ENCODE measurements at regions of chr20 and their contacts with region 1.

Region 1: GRCh38 chr20:51423290-51423667 is 119.2 kb downstream of the NFATC2 start:
- DNase-seq: peak; percentile 78
- H3K4me3 Mint-ChIP-seq: peak overlapping the region; percentile 13
- H3K27ac Mint-ChIP-seq: peak overlapping the region; percentile 90
- H3K4me1 Mint-ChIP-seq: peaks cover 86% of the 10 kb centered on the region
- H3K27me3 Mint-ChIP-seq: no peaks in the 10 kb centered on the region

Region 2: GRCh38 chr20:51404298-51405060 is 18.8 kb before region 1 on chr20:
- CTCF ChIA-PET with region 1: interaction called, 15 read pairs
- POLR2A ChIA-PET with region 1: interaction called, 41 read pairs
- intact Hi-C with region 1: loop called (anchors 1 kb)
- DNase-seq: peak; percentile 97
- H3K4me3 Mint-ChIP-seq: peak overlapping the region; percentile 17
- H3K27ac Mint-ChIP-seq: peak overlapping the region; percentile 99
- H3K4me1 Mint-ChIP-seq: peaks cover 93% of the 10 kb centered on the region
- H3K27me3 Mint-ChIP-seq: no peaks in the 10 kb centered on the region

Region 3: GRCh38 chr20:51469578-51470498 is 46.6 kb after region 1 on chr20:
- CTCF ChIA-PET with region 1: no interaction called
- POLR2A ChIA-PET with region 1: interaction called, 4 read pairs
- intact Hi-C with region 1: loop called (anchors 2 kb)
- DNase-seq: no peak
- H3K4me3 Mint-ChIP-seq: no peak overlapping the region
- H3K27ac Mint-ChIP-seq: peak overlapping the region; percentile 89
- H3K4me1 Mint-ChIP-seq: peaks cover 53% of the 10 kb centered on the region
- H3K27me3 Mint-ChIP-seq: no peaks in the 10 kb centered on the region

Region 4: DNA sequence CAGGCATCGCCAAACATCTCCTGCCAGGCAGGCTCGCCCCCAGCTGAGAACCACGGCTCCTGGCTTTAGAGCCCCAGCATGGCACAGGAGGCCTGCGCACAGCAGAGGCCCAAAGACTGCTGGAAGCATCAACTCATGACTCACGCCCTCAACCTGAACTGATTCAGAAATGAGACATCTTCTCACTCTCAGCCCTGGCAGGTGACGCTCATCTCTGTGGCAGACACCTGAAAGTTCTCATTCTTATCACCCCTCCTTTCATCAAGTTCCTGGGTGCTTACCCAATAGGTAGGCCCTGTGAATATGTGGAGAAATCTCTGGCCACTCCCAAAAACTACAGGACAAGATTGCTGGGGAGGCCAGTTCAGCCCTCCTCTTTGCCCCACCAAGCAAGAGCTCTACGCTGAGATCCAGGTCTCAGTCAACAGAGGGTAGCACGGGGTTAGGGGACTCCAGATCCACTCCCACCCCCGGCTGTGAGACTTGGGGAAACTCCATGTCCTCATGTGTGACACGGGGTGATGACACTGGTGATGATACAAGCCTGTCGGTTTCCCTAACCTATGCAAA is 107.9 kb after region 1 on chr20:
- CTCF ChIA-PET with region 1: no interaction called
- POLR2A ChIA-PET with region 1: interaction called, 8 read pairs
- intact Hi-C with region 1: loop called (anchors 1 kb)
- DNase-seq: peak; percentile 91
- H3K4me3 Mint-ChIP-seq: peak overlapping the region; percentile 84
- H3K27ac Mint-ChIP-seq: peak overlapping the region; percentile 94
- H3K4me1 Mint-ChIP-seq: peaks cover 94% of the 10 kb centered on the region
- H3K27me3 Mint-ChIP-seq: no peaks in the 10 kb centered on the region

Measured in activated CD4-positive, alpha-beta memory T cell treated with anti-CD3 and anti-CD28 coated beads for 36 hours (primary cell).